ENCODE measurements at regions of chr9 and their contacts with region 1.

Region 1: DNA sequence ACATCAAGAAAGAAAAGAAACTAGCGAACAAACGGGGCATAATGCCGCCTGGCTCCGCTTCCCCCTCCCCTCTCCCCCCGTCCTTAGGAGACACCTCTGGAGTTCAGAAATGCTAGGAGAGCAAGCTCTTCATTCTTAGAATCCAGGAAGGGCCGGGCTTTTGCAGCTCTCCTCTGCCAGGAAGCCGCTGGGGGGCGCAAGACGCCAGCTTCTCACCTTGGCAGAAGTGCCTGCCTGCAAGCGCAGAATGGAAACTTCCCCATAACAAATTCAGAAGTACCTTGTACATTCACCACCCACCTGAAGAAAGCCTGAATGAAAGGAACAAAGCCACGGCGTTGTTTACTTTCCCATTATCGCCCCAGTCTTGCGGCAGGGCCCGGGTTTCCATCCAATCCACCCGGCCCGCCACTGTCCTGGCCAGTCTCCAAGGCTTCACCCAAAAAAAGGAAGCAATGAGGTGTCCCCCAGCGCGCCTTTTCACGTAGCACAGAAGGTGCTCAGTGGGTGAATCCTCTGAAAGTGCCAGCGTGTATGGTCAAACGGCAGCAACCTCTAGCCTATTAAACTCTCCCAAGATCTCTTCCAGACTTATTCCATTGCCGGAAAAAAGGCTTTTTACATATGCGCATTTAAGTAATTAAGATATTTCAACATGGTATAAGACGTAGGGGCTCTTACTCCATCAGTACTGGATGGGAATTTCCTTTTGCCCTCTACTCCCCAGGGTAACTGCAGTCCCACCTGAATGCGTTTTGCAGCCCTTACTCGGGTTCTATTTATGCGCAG is 1.6 kb upstream of the GADD45G start:
- DNase-seq: peak; percentile 85 to 87 (median 85)
- H3K4me3 ChIP-seq: peak overlapping the region; percentile 57 to 79
- H3K4me3 Mint-ChIP-seq: peak overlapping the region; percentile 77 to 97 (median 86)
- H3K27ac ChIP-seq: no peak overlapping the region
- H3K27ac Mint-ChIP-seq: peak overlapping the region; percentile 54 to 98 (median 78)
- H3K4me1 ChIP-seq: peaks cover 35% of the 10 kb centered on the region
- H3K4me1 Mint-ChIP-seq: peaks cover 14 to 40% (median 17%) of the 10 kb centered on the region in 4 donors
- H3K27me3 ChIP-seq: no peaks in the 10 kb centered on the region
- H3K27me3 Mint-ChIP-seq: no peaks in the 10 kb centered on the region

Region 2: DNA sequence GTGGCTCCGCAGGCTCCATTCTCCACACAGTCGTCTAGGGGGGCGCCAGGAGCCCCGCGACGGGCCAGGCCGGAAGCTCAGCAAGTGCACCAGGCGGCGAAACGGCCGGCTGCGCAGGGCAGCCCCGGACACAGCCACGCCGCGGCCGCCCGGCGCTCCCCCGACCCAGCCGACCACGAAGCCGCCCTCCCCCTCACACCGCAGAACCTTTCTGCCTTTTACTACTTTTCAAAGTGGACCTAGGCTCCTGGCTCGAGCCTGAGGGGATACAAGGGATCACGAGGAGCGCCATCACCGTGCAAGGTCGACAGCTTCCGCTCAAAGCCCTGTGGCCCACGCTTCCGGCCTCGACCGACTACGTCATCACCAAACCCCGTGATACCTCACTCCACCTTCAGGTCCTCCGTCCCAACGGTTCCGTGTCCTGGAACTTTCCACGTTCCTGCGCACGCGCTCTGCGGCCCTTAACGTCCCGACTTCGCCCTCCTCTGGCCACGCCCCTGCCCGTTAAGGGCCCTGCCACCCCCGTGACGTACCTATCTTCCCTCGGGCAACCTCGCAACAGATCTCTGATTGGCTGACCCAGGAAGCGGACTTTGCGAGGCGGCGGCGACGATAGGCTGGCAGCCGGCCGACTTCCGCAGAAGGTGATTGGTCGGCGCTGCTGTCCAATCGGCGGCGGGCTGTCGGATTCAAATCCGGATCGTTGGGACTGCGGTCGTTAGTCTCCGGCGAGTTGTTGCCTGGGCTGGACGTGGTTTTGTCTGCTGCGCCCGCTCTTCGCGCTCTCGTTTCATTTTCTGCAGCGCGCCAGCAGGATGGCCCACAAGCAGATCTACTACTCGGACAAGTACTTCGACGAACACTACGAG is 292.5 kb before region 1 on chr9 and contains the start of gene CKS2:
- CTCF ChIA-PET with region 1: no interaction called
- POLR2A ChIA-PET with region 1: interaction called, 3 read pairs
- intact Hi-C with region 1: loop called (anchors 2 kb)
- DNase-seq: peak; percentile 99 to 100 (median 100)
- H3K4me3 ChIP-seq: peak within 1 kb of the TSS; percentile 59 to 77
- H3K4me3 Mint-ChIP-seq: peak within 1 kb of the TSS; percentile 91 to 98 (median 96)
- H3K27ac ChIP-seq: peak within 1 kb of the TSS; percentile 96
- H3K27ac Mint-ChIP-seq: peak within 1 kb of the TSS; percentile 99 to 100 (median 99)
- H3K4me1 ChIP-seq: peaks cover 36% of the 10 kb centered on the region
- H3K4me1 Mint-ChIP-seq: peaks cover 16 to 40% (median 30%) of the 10 kb centered on the region in 4 donors
- H3K27me3 ChIP-seq: no peaks in the 10 kb centered on the region
- H3K27me3 Mint-ChIP-seq: peaks cover 1 to 2% of the 10 kb centered on the region in 2 donors
- total RNA-seq, gene CKS2: 6.5 to 8.5 TPM

Region 3: GRCh38 chr9:89613912-89614892 is 11.0 kb after region 1 on chr9:
- CTCF ChIA-PET with region 1: interaction called, 12 read pairs
- POLR2A ChIA-PET with region 1: interaction called, 4 read pairs
- intact Hi-C with region 1: no loop called
- DNase-seq: no peak
- H3K4me3 ChIP-seq: no peak overlapping the region
- H3K4me3 Mint-ChIP-seq: no peak overlapping the region
- H3K27ac ChIP-seq: no peak overlapping the region
- H3K27ac Mint-ChIP-seq: no peak overlapping the region
- H3K4me1 ChIP-seq: no peaks in the 10 kb centered on the region
- H3K4me1 Mint-ChIP-seq: no peaks in the 10 kb centered on the region
- H3K27me3 ChIP-seq: no peaks in the 10 kb centered on the region
- H3K27me3 Mint-ChIP-seq: no peaks in the 10 kb centered on the region

Region 4: GRCh38 chr9:89879701-89880100 is 276.5 kb after region 1 on chr9:
- CTCF ChIA-PET with region 1: interaction called, 4 read pairs
- POLR2A ChIA-PET with region 1: no interaction called
- intact Hi-C with region 1: loop called (anchors 5 kb)
- DNase-seq: no peak
- H3K4me3 ChIP-seq: no peak overlapping the region
- H3K4me3 Mint-ChIP-seq: no peak overlapping the region
- H3K27ac ChIP-seq: no peak overlapping the region
- H3K27ac Mint-ChIP-seq: no peak overlapping the region
- H3K4me1 ChIP-seq: no peaks in the 10 kb centered on the region
- H3K4me1 Mint-ChIP-seq: no peaks in the 10 kb centered on the region
- H3K27me3 ChIP-seq: no peaks in the 10 kb centered on the region
- H3K27me3 Mint-ChIP-seq: no peaks in the 10 kb centered on the region

Region 5: GRCh38 chr9:90095682-90096081 is 492.5 kb after region 1 on chr9:
- CTCF ChIA-PET with region 1: interaction called, 54 read pairs
- POLR2A ChIA-PET with region 1: interaction called, 3 read pairs
- intact Hi-C with region 1: no loop called
- DNase-seq: no peak
- H3K4me3 ChIP-seq: no peak overlapping the region
- H3K4me3 Mint-ChIP-seq: no peak overlapping the region
- H3K27ac ChIP-seq: no peak overlapping the region
- H3K27ac Mint-ChIP-seq: no peak overlapping the region
- H3K4me1 ChIP-seq: peaks cover 12% of the 10 kb centered on the region
- H3K4me1 Mint-ChIP-seq: peaks cover 12 to 15% (median 15%) of the 10 kb centered on the region in 4 donors
- H3K27me3 ChIP-seq: no peaks in the 10 kb centered on the region
- H3K27me3 Mint-ChIP-seq: peaks cover 2 to 4% of the 10 kb centered on the region in 2 donors

Region 6: DNA sequence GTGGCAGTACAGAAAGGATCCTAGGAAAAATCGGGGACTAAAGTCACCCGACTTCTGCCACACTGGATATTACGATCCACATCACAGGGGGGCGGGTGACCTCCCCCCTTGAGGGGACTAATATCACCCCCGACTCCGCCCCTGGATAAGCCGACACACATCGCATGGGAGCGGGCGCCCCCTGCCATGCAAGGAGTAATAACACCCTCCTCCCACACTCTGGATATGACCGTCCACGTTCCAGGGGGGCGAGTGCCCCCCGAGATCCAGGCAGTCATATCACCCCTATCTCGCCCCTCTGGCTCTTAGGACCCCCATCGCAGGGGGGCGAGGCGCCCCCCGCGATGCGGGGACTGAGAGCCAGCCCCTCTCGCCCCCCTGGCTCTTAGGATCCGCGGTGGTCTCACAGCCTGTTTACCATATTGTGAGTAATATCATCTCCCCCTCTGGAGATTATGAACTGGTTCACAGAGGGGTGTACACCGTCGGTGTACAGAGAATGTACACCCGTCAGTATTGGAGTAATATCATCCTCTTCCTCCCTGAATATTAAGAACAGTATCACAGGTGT is 616.5 kb after region 1 on chr9:
- CTCF ChIA-PET with region 1: interaction called, 4 read pairs
- POLR2A ChIA-PET with region 1: no interaction called
- intact Hi-C with region 1: loop called (anchors 2 kb)
- DNase-seq: peak in 4 of 5 donors; percentile 11 to 21 (median 16)
- H3K4me3 ChIP-seq: no peak overlapping the region
- H3K4me3 Mint-ChIP-seq: no peak overlapping the region
- H3K27ac ChIP-seq: no peak overlapping the region
- H3K27ac Mint-ChIP-seq: no peak overlapping the region
- H3K4me1 ChIP-seq: no peaks in the 10 kb centered on the region
- H3K4me1 Mint-ChIP-seq: peaks cover 0 to 5% (median 2%) of the 10 kb centered on the region in 4 donors
- H3K27me3 ChIP-seq: no peaks in the 10 kb centered on the region
- H3K27me3 Mint-ChIP-seq: peaks cover 0 to 9% of the 10 kb centered on the region in 2 donors

Measured in CD4-positive, alpha-beta memory T cell (primary cell).